WTC11 (cell line): ENCODE measurements at regions of chr22 and their contacts with region 1.

Region 1: DNA sequence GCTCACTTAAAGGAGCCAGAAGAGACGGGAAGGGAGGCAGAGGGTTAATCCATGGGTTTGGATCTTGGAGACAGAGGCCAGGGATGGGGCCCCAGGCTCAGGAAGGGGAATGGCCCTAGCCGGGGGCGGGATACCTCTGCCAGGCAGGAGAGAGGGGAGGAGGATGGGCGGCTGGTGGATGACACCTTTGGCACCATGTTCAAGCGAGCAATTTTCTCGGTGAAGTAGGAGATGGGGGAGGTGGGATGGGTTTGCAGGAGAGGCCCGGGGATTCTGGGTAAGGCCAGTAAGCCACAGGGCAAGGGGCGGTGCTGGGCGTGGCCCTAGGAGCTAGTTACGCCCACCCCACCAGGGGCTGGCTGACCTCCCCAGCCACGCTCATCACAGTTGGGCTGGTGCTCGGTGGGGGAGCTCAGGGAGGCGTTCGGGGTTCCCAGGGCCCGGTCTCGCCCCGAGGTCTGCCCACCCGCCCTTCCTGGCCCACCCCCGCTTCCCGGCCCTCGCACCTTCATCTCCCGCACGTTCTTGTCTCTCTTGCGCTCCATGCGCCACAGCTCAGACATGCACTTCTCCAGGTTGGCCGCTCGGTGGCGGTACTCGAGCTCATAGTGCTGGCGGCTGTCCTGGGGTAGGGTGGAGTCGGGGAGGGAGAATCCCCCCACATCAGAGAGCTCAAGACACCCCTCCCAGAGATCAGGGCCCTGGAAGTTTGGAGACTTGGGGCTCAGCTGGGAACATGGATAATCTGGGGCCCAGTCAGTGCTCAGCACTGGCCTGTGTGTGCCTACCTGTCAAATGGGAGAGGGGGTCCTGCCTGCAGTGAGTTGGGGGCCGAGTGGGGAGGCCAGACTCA is 12.7 kb downstream of the BAIAP2L2 start:
- DNase-seq: peak; percentile 83
- ATAC-seq: peak; percentile 93
- H3K4me3 Mint-ChIP-seq: peak overlapping the region; percentile 72
- H3K27ac Mint-ChIP-seq: no peak overlapping the region
- H3K4me1 Mint-ChIP-seq: peaks cover 14% of the 10 kb centered on the region
- H3K27me3 Mint-ChIP-seq: peaks cover 7% of the 10 kb centered on the region
- CTCF ChIP-seq: peak; percentile 75

Region 2: DNA sequence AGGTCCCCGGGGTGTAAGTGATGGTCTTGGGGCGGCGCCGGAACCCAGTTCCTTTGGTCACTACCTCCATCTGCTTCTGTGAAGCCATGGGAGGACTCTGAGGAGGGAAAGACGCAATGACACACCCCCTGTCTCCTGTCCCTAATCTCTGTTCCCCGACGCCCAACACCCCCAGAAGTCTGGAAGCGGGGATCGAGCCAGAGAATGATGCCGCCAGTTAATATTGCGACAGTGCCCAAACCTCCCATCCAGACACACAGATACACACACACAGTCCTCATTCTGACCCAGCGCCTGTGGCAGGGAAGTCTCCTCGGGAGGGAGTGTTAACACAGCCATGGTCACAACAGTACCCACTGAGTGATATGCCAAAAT is 144.7 kb before region 1 on chr22:
- CTCF ChIA-PET with region 1: no interaction called
- POLR2A ChIA-PET with region 1: no interaction called
- DNase-seq: no peak
- ATAC-seq: peak; percentile 46
- H3K4me3 Mint-ChIP-seq: peak overlapping the region; percentile 95
- H3K27ac Mint-ChIP-seq: peak overlapping the region; percentile 29
- H3K4me1 Mint-ChIP-seq: peaks cover 24% of the 10 kb centered on the region
- H3K27me3 Mint-ChIP-seq: peaks cover 16% of the 10 kb centered on the region
- CTCF ChIP-seq: no peak

Region 3: DNA sequence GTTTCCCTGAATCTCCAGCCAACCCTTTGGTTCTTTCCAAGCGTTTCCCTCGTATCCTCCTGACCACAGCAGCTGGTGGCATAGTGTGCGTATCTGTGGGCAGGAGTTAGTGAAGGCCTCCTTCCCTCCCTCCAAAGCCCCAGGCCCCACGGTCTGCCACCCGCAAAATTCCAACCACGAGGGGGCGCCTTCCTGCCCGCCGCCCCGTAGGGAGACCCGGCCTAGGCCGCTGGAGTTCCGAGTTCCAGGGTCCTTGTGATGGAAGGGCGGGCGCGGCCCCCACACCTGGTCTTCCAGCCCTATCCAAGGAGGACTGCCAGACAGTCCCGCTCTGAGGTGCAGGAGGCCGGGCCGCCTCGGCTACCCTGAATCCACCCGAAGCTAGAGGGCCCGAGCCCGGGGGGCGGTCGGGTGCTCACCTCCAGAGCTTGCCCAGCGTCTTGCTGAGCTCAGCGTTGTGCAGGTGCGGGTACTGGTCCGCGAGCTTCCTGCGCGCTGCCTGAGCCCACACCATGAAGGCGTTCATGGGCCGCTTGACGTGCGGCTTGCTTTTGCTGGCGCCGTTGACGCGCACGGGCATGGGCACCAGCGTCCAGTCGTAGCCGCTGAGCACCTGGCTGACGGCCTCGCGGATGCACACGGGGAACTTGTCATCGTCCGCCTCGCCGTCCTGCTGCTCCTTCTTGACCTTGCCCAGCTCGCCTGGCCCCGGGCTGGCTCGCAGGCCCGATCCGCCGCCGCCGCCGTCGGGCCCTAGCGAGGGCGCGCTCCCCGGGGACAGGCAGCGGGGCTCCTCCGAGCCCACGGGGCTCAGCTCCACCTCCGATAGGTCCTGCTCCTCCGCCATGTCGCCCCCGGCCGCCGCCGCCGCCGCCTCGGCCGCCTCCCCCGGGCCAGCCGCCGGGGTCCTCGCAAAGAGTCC is 114.6 kb before region 1 on chr22:
- CTCF ChIA-PET with region 1: interaction called, 10 read pairs
- POLR2A ChIA-PET with region 1: no interaction called
- DNase-seq: peak; percentile 82
- ATAC-seq: peak; percentile 59
- H3K4me3 Mint-ChIP-seq: peak overlapping the region; percentile 69
- H3K27ac Mint-ChIP-seq: no peak overlapping the region
- H3K4me1 Mint-ChIP-seq: peaks cover 22% of the 10 kb centered on the region
- H3K27me3 Mint-ChIP-seq: peaks cover 19% of the 10 kb centered on the region
- CTCF ChIP-seq: peak; percentile 87

Region 4: GRCh38 chr22:38056969-38057891 is 40.6 kb before region 1 on chr22 and contains the start of gene PICK1:
- CTCF ChIA-PET with region 1: interaction called, 91 read pairs
- POLR2A ChIA-PET with region 1: interaction called, 5 read pairs
- DNase-seq: peak; percentile 95
- ATAC-seq: peak; percentile 78
- H3K4me3 Mint-ChIP-seq: peak within 1 kb of the TSS; percentile 94
- H3K27ac Mint-ChIP-seq: peak within 1 kb of the TSS; percentile 100
- H3K4me1 Mint-ChIP-seq: peaks cover 10% of the 10 kb centered on the region
- H3K27me3 Mint-ChIP-seq: no peaks in the 10 kb centered on the region; the same call in 1 of the 2 replicates
- CTCF ChIP-seq: no peak
- total RNA-seq, gene PICK1: 28.1 to 33.4 TPM (median 28.2 TPM) in 3 replicates

Region 5: DNA sequence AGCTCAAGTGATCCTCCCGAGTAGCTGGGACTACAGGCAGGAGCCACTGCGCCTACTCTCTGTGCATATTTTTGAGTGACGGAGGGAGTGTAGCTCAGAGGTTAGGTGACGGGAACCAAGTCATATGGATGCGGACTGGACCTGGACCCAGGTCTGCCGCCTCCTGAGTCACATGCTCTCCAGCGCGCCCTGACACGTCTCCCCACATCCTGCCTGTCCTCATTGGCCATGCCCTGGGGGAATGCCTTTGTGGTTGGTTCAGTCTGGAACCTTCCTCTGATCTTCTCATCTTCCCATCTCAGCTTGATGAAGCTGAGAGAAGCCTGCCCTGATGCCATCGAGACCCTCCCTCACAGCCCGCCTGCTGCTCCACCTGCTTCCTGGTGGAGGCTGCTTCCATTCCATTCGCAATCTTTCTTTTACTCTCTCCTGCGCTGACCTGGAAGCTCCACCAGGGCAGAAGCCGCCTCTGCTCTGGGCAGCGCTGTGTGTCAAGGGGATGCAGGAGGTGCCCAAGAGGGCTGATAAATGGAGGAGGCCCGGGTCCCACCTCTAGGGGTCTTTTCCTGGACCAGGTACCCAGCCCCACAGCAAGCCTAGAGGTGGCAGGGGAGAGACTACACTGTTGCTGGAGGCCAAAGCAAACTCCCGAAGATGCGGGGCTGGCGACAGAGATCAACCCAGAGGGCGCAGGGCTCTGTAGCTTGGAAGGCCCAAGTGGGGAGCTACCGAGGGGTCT is 26.6 kb after region 1 on chr22:
- CTCF ChIA-PET with region 1: interaction called, 37 read pairs
- POLR2A ChIA-PET with region 1: no interaction called
- DNase-seq: no peak
- ATAC-seq: peak; percentile 81
- H3K4me3 Mint-ChIP-seq: no peak overlapping the region
- H3K27ac Mint-ChIP-seq: peak overlapping the region; percentile 69
- H3K4me1 Mint-ChIP-seq: peaks cover 7% of the 10 kb centered on the region
- H3K27me3 Mint-ChIP-seq: no peaks in the 10 kb centered on the region
- CTCF ChIP-seq: no peak

Region 6: GRCh38 chr22:38181453-38182247 is 83.9 kb after region 1 on chr22 and contains the start of gene PLA2G6:
- CTCF ChIA-PET with region 1: interaction called, 17 read pairs
- POLR2A ChIA-PET with region 1: no interaction called
- DNase-seq: peak; percentile 100
- ATAC-seq: peak; percentile 98
- H3K4me3 Mint-ChIP-seq: peak within 1 kb of the TSS; percentile 89
- H3K27ac Mint-ChIP-seq: peak within 1 kb of the TSS; percentile 99
- H3K4me1 Mint-ChIP-seq: peaks cover 33% of the 10 kb centered on the region
- H3K27me3 Mint-ChIP-seq: no peaks in the 10 kb centered on the region; the same call in 1 of the 2 replicates
- CTCF ChIP-seq: no peak
- total RNA-seq, gene PLA2G6: 29.9 to 44.1 TPM (median 37.6 TPM) in 3 replicates

Region 7: DNA sequence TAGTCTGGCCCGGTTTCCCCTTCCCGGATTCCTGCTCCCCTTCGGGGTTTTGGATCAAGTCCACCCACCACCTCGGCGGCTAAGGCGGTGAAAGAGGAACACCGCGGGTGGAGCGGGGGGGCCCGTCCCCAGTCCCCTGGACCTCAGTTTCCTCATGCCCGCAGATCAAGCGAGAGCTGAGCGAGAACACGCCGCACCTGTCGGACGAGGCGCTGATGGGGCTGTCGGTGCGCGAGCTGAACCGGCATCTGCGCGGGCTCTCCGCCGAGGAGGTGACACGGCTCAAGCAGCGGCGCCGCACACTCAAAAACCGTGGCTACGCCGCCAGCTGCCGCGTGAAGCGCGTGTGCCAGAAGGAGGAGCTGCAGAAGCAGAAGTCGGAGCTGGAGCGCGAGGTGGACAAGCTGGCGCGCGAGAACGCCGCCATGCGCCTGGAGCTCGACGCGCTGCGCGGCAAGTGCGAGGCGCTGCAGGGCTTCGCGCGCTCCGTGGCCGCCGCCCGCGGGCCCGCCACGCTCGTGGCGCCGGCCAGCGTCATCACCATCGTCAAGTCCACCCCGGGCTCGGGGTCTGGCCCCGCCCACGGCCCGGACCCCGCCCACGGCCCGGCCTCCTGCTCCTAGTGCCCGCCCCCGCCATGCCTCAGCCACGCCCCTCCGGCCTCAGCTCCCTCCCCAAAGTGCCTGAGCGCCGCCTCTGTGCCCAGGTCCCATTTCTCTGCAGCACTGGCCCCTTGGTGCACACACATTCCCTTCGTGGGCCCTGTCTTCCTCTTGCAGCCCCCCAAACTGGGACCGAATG is 116.7 kb after region 1 on chr22:
- CTCF ChIA-PET with region 1: interaction called, 24 read pairs
- POLR2A ChIA-PET with region 1: interaction called, 5 read pairs
- DNase-seq: peak; percentile 89
- ATAC-seq: peak; percentile 81
- H3K4me3 Mint-ChIP-seq: peak overlapping the region; percentile 68
- H3K27ac Mint-ChIP-seq: peak overlapping the region; percentile 70; the same call in 1 of the 2 replicates
- H3K4me1 Mint-ChIP-seq: peaks cover 23% of the 10 kb centered on the region
- H3K27me3 Mint-ChIP-seq: peaks cover 29% of the 10 kb centered on the region
- CTCF ChIP-seq: no peak

Region 8: GRCh38 chr22:38262051-38262795 is 164.4 kb after region 1 on chr22:
- CTCF ChIA-PET with region 1: interaction called, 10 read pairs
- POLR2A ChIA-PET with region 1: no interaction called
- DNase-seq: peak; percentile 78
- ATAC-seq: peak; percentile 85
- H3K4me3 Mint-ChIP-seq: no peak overlapping the region
- H3K27ac Mint-ChIP-seq: peak overlapping the region; percentile 95
- H3K4me1 Mint-ChIP-seq: peaks cover 56% of the 10 kb centered on the region
- H3K27me3 Mint-ChIP-seq: no peaks in the 10 kb centered on the region
- CTCF ChIP-seq: no peak